ENCODE measurements at regions of chr6 and their contacts with region 1.

Region 1: GRCh38 chr6:39309942-39310531 is 4.2 kb downstream of the KCNK17 start:
- DNase-seq: peak; percentile 88
- H3K4me3 ChIP-seq: no peak overlapping the region; a peak in 1 of 4 replicates
- H3K27ac ChIP-seq: no peak overlapping the region
- H3K4me1 ChIP-seq: peaks cover 0 to 2% of the 10 kb centered on the region in 2 experiments; a peak in 1 of 4 replicates
- H3K27me3 ChIP-seq: peaks cover 7% of the 10 kb centered on the region; the same call in 1 of the 2 replicates
- CTCF ChIP-seq: peak; percentile 78
- EP300 ChIP-seq: no peak
- RAD21 ChIP-seq: peak; percentile 94

Region 2: DNA sequence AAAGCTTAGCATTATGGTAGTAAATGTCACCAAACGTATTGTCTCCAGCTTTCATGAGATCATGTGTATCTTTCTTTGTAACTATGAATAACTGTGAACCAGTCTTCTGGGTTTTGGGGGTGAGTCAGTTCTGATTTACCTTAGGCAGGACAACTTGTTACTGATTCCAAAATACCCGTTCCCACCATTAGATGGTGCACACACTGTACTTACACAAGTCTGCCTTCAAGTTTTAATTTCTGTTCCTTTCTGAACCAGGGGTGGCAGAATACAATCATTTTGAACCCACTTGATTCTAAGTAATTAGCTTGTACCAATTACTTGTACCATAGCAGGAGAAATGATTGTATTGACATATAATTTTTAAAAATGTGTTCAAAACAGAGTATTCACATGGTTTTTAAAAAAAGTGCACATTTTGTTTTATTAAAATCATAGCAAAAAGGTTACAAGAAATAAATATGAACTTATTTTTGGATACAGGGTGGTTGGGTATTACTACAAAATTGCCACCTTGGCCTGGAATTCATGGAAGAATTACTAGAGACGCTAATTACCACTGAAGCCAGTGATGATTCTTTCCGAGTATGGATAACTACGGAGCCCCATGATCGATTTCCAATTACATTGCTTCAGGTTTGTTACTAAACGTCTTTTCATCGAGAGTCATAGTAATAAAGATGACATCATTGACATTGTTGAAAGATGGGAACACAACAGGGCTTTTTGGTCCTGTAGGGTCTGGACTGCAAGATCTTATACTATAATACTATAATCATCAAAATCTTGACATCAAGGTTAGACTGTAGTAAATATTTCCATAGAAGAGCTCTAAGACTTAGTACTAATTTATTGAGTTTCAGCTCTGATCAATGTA is 336.6 kb before region 1 on chr6:
- CTCF ChIA-PET with region 1: interaction called, 83 read pairs
- POLR2A ChIA-PET with region 1: no interaction called
- DNase-seq: peak; percentile 64
- H3K4me3 ChIP-seq: no peak overlapping the region
- H3K27ac ChIP-seq: no peak overlapping the region
- H3K4me1 ChIP-seq: peaks cover 0 to 16% of the 10 kb centered on the region in 2 experiments; a peak in 2 of 4 replicates
- H3K27me3 ChIP-seq: no peaks in the 10 kb centered on the region
- CTCF ChIP-seq: peak; percentile 62
- EP300 ChIP-seq: no peak
- RAD21 ChIP-seq: peak; percentile 81

Region 3: GRCh38 chr6:38997128-38997761 is 312.8 kb before region 1 on chr6:
- CTCF ChIA-PET with region 1: interaction called, 110 read pairs
- POLR2A ChIA-PET with region 1: no interaction called
- DNase-seq: peak; percentile 49
- H3K4me3 ChIP-seq: no peak overlapping the region
- H3K27ac ChIP-seq: no peak overlapping the region
- H3K4me1 ChIP-seq: no peaks in the 10 kb centered on the region
- H3K27me3 ChIP-seq: no peaks in the 10 kb centered on the region
- CTCF ChIP-seq: peak; percentile 61
- EP300 ChIP-seq: no peak
- RAD21 ChIP-seq: peak; percentile 91

Region 4: GRCh38 chr6:39296745-39297640 is 13.0 kb before region 1 on chr6:
- CTCF ChIA-PET with region 1: interaction called, 44 read pairs
- POLR2A ChIA-PET with region 1: no interaction called
- DNase-seq: peak; percentile 77
- H3K4me3 ChIP-seq: no peak overlapping the region
- H3K27ac ChIP-seq: no peak overlapping the region
- H3K4me1 ChIP-seq: peaks cover 0 to 10% of the 10 kb centered on the region in 2 experiments; a peak in 1 of 4 replicates
- H3K27me3 ChIP-seq: no peaks in the 10 kb centered on the region
- CTCF ChIP-seq: no peak
- EP300 ChIP-seq: no peak
- RAD21 ChIP-seq: no peak

Region 5: GRCh38 chr6:39322306-39322850 is 12.3 kb after region 1 on chr6 and contains the start of gene KCNK16:
- CTCF ChIA-PET with region 1: interaction called, 20 read pairs
- POLR2A ChIA-PET with region 1: no interaction called
- DNase-seq: no peak
- H3K4me3 ChIP-seq: no peak within 1 kb of the TSS
- H3K27ac ChIP-seq: no peak within 1 kb of the TSS
- H3K4me1 ChIP-seq: peaks cover 0 to 9% of the 10 kb centered on the region in 2 experiments; a peak in 1 of 4 replicates
- H3K27me3 ChIP-seq: no peaks in the 10 kb centered on the region
- CTCF ChIP-seq: no peak
- EP300 ChIP-seq: no peak
- RAD21 ChIP-seq: no peak
- polyA plus RNA-seq, gene KCNK16: not detected in 2 replicates